ENCODE measurements at regions of chr13 and their contacts with region 1.

Region 1: DNA sequence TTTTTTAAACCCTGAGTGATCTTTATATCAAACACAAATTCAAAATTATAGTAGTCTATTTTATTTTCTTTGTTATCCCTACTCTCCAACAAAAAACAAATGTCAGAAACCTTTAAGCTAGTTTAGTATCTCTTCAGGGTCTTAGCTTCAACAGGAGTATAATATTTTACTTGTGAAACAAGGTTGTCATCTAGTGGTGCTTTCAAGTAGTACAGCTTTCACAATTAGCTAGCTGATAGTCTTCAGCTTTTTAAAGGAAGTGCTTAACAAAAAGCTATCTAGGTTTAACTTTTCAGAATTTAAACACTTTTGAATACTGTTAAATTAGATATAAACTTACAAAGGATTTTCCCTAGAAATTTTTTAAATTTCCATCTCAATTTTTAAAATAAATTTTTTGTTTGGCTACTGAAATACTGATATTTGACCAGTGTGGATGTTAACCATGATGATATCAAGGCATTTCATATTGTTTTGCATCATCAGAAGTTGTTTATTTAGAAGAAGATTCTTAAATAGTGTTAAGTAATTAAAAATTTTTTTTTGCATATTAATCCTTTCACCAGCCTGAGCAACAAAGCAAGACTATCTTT is 34.2 kb downstream of the TDRD3 start:
- DNase-seq: peak; percentile 61
- ATAC-seq: peak; percentile 68
- H3K4me3 ChIP-seq: no peak overlapping the region
- H3K27ac ChIP-seq: no peak overlapping the region
- H3K4me1 ChIP-seq: peaks cover 12% of the 10 kb centered on the region
- H3K27me3 ChIP-seq: no peaks in the 10 kb centered on the region
- CTCF ChIP-seq: peak; percentile 87 to 93 (median 88); a peak in 5 of 6 replicates
- EP300 ChIP-seq: no peak
- POLR2A ChIP-seq: no peak
- RAD21 ChIP-seq: peak; percentile 98

Region 2: GRCh38 chr13:59391696-59392095 is 1039.5 kb before region 1 on chr13:
- CTCF ChIA-PET with region 1: interaction called, 15 read pairs
- POLR2A ChIA-PET with region 1: no interaction called
- RAD21 ChIA-PET with region 1: interaction called, 14 read pairs
- SMC1A ChIA-PET with region 1: interaction called, 6 read pairs
- in situ Hi-C with region 1: loop called (anchors 10 kb)
- intact Hi-C with region 1: loop called (anchors 5 kb)
- DNase-seq: peak; percentile 45
- ATAC-seq: peak; percentile 97
- H3K4me3 ChIP-seq: no peak overlapping the region
- H3K27ac ChIP-seq: peak overlapping the region; percentile 38
- H3K4me1 ChIP-seq: no peaks in the 10 kb centered on the region
- H3K27me3 ChIP-seq: no peaks in the 10 kb centered on the region
- CTCF ChIP-seq: peak; percentile 76 to 83 (median 83); a peak in 5 of 6 replicates
- EP300 ChIP-seq: no peak
- POLR2A ChIP-seq: no peak
- RAD21 ChIP-seq: peak; percentile 87

Region 3: DNA sequence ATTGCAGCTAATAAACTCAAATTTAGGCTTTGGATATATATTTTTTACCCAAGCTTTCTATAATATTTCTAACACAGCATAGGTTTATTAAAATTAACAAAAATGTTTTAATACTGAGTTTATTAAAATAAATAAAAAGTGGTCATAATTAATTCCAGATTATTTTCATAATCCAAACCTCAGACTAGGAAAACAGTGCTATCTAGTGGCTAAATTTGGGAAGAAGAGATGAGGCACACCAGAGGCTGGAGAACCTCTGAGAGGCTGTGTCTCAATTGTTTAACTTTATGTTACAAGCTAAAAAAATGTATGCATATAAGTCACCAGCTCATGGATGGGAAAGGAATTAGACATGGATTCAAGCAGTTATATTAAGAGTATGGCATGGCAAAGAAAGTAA is 659.9 kb before region 1 on chr13:
- CTCF ChIA-PET with region 1: interaction called, 7 read pairs
- POLR2A ChIA-PET with region 1: interaction called, 4 read pairs
- RAD21 ChIA-PET with region 1: interaction called, 4 read pairs
- SMC1A ChIA-PET with region 1: interaction called, 3 read pairs
- in situ Hi-C with region 1: no loop called
- intact Hi-C with region 1: loop called (anchors 10 kb)
- DNase-seq: no peak
- ATAC-seq: no peak
- H3K4me3 ChIP-seq: no peak overlapping the region
- H3K27ac ChIP-seq: no peak overlapping the region
- H3K4me1 ChIP-seq: no peaks in the 10 kb centered on the region
- H3K27me3 ChIP-seq: no peaks in the 10 kb centered on the region
- CTCF ChIP-seq: peak; percentile 39 to 54 (median 44); a peak in 5 of 6 replicates
- EP300 ChIP-seq: no peak
- POLR2A ChIP-seq: no peak
- RAD21 ChIP-seq: peak; percentile 61

Region 4: GRCh38 chr13:60163478-60164233 is 267.5 kb before region 1 on chr13 and contains the start of gene DIAPH3:
- CTCF ChIA-PET with region 1: interaction called, 4 read pairs
- POLR2A ChIA-PET with region 1: no interaction called
- RAD21 ChIA-PET with region 1: interaction called, 3 read pairs
- SMC1A ChIA-PET with region 1: interaction called, 3 read pairs
- in situ Hi-C with region 1: loop called (anchors 5 kb)
- intact Hi-C with region 1: loop called (anchors 5 kb)
- DNase-seq: peak; percentile 76
- ATAC-seq: peak; percentile 99
- H3K4me3 ChIP-seq: peak within 1 kb of the TSS; percentile 80
- H3K27ac ChIP-seq: peak within 1 kb of the TSS; percentile 86
- H3K4me1 ChIP-seq: no peaks in the 10 kb centered on the region
- H3K27me3 ChIP-seq: no peaks in the 10 kb centered on the region
- CTCF ChIP-seq: no peak
- EP300 ChIP-seq: no peak
- POLR2A ChIP-seq: peak; percentile 97
- RAD21 ChIP-seq: no peak
- polyA plus RNA-seq, gene DIAPH3: 10.1 to 13.0 TPM

Region 5: DNA sequence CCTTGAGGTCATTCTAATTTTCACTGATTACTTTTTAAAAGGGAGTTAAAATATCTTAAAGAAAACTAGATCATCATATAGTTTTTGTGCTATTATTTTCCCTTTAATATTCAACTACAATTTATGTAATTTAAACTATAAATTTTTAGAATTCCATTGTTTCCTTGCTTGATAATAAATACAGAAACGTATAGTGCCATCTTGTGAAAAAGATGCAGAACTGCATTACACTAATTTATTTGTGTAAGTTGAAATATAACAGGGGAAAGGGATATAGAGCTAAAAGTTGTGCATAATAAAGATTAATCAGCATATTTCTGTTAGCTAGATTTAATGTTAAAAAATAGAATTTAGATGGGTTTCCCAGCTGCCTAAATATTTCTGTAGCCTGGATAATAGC is 95.7 kb before region 1 on chr13:
- CTCF ChIA-PET with region 1: interaction called, 17 read pairs
- POLR2A ChIA-PET with region 1: no interaction called
- RAD21 ChIA-PET with region 1: interaction called, 22 read pairs
- SMC1A ChIA-PET with region 1: interaction called, 15 read pairs
- in situ Hi-C with region 1: no loop called
- intact Hi-C with region 1: loop called (anchors 2 kb)
- DNase-seq: no peak
- ATAC-seq: no peak
- H3K4me3 ChIP-seq: no peak overlapping the region
- H3K27ac ChIP-seq: no peak overlapping the region
- H3K4me1 ChIP-seq: no peaks in the 10 kb centered on the region
- H3K27me3 ChIP-seq: no peaks in the 10 kb centered on the region
- CTCF ChIP-seq: peak in 2 of 3 experiments; percentile 23 to 47; a peak in 4 of 6 replicates
- EP300 ChIP-seq: no peak
- POLR2A ChIP-seq: no peak
- RAD21 ChIP-seq: peak; percentile 56

Region 6: DNA sequence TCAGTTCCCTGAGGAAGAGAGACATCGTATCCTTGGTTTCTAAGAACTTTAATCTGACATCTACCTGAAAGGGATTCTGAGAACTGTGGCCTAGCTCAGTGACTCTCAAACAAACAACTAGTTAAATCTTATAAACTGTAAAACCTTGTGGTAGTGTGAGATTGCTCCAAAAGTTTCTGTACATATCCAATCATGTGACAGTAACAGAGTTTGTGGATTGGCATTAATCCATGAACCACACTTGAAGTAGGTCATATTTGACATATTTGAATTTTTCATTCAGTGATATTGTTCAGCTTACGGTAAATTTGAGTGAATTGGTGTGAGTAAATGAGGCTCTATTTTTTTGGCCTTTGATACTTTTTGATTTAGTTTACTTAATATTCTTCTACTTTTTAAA is 19.2 kb before region 1 on chr13:
- CTCF ChIA-PET with region 1: interaction called, 7 read pairs
- POLR2A ChIA-PET with region 1: interaction called, 4 read pairs
- RAD21 ChIA-PET with region 1: interaction called, 29 read pairs
- SMC1A ChIA-PET with region 1: interaction called, 55 read pairs
- in situ Hi-C with region 1: no loop called
- intact Hi-C with region 1: no loop called
- DNase-seq: no peak
- ATAC-seq: no peak
- H3K4me3 ChIP-seq: no peak overlapping the region
- H3K27ac ChIP-seq: no peak overlapping the region
- H3K4me1 ChIP-seq: no peaks in the 10 kb centered on the region
- H3K27me3 ChIP-seq: no peaks in the 10 kb centered on the region
- CTCF ChIP-seq: no peak
- EP300 ChIP-seq: no peak
- POLR2A ChIP-seq: no peak
- RAD21 ChIP-seq: no peak

Region 7: DNA sequence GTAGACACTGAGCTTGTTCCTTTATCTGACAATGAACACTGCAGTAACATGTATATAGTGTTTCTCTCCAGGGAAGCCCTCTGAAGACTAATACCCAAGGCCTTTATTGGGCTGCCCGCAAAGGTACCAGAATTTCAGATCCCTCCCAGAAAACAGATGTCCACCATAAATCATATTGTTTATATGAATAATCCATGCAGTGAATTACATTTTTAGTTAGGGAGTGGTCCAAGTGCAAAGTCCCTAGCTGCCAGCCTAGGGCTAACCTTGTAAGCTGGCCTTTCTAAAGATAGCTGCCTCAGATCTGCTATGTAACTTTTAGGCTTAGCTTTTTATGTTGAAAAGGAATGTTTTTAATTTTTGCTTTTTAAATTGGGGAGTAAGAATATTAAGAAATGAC is 10.6 kb after region 1 on chr13:
- CTCF ChIA-PET with region 1: interaction called, 6 read pairs
- POLR2A ChIA-PET with region 1: no interaction called
- RAD21 ChIA-PET with region 1: interaction called, 19 read pairs
- SMC1A ChIA-PET with region 1: interaction called, 11 read pairs
- in situ Hi-C with region 1: no loop called
- intact Hi-C with region 1: no loop called
- DNase-seq: no peak
- ATAC-seq: no peak
- H3K4me3 ChIP-seq: no peak overlapping the region
- H3K27ac ChIP-seq: no peak overlapping the region
- H3K4me1 ChIP-seq: no peaks in the 10 kb centered on the region
- H3K27me3 ChIP-seq: no peaks in the 10 kb centered on the region
- CTCF ChIP-seq: no peak
- EP300 ChIP-seq: no peak
- POLR2A ChIP-seq: no peak
- RAD21 ChIP-seq: no peak